Psoas muscle (tissue), 8 donors: ENCODE measurements at regions of chr12 and their contacts with region 1.

Region 1: DNA sequence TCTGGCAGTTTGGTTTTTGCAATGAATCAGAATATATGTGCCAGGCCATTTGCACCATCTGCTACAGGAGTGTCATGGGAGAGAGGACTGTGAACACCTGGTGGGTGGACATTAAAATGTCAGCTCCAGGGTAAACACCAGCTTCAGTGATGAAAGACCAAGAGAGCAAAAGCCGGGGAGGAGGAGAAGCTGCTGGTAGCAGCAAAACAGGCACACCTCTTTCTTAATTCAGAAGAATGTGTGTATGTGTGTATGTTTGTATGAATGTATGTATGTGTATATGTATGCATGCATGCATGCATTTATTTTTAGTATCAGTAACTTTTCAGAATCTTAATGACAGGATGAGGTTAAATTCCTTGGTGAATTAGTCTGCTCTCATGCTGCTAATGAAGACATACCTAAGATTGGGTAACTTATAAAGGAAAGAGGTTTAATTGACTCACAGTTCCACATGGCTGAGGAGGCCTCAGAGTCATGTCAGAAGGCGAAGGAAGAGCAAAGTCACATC is 357.4 kb upstream of the PRICKLE1 start:
- DNase-seq: no peak
- ATAC-seq: no peak
- H3K4me3 ChIP-seq: no peak overlapping the region
- H3K27ac ChIP-seq: no peak overlapping the region
- H3K4me1 ChIP-seq: no peaks in the 10 kb centered on the region
- H3K27me3 ChIP-seq: no peaks in the 10 kb centered on the region
- CTCF ChIP-seq: no peak

Region 2: GRCh38 chr12:42666671-42667243 is 280.2 kb before region 1 on chr12:
- intact Hi-C with region 1: no loop called
- DNase-seq: no peak
- ATAC-seq: no peak
- H3K4me3 ChIP-seq: no peak overlapping the region
- H3K27ac ChIP-seq: no peak overlapping the region
- H3K4me1 ChIP-seq: peaks cover 4% of the 10 kb centered on the region
- H3K27me3 ChIP-seq: no peaks in the 10 kb centered on the region
- CTCF ChIP-seq: no peak

Region 3: DNA sequence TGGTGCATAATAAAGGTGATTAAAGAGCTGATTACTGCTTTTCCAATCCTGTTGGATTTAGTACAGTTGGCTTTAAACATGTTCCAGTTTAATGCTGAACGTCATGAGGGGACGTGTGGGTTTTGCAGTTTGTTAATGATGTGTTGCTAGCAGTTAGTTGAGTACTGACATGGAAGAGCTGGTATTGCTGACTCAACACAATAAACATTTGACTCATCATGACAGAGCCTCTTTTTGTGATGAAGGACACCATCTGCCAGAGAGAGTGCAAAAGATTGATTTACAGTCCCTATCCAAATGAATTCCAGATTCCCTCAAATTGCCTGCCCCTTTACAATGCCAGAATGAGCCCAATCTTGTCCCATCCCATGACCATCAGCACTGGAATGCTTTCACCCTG is 11.2 kb before region 1 on chr12:
- intact Hi-C with region 1: loop called in 1 of 2 experiments (anchors 1 kb)
- DNase-seq: no peak
- ATAC-seq: no peak
- H3K4me3 ChIP-seq: no peak overlapping the region
- H3K27ac ChIP-seq: no peak overlapping the region
- H3K4me1 ChIP-seq: no peaks in the 10 kb centered on the region
- H3K27me3 ChIP-seq: no peaks in the 10 kb centered on the region
- CTCF ChIP-seq: no peak